Naive thymus-derived CD4-positive, alpha-beta T cell (primary cell): ENCODE measurements at regions of chr16 and their contacts with region 1.

Region 1: DNA sequence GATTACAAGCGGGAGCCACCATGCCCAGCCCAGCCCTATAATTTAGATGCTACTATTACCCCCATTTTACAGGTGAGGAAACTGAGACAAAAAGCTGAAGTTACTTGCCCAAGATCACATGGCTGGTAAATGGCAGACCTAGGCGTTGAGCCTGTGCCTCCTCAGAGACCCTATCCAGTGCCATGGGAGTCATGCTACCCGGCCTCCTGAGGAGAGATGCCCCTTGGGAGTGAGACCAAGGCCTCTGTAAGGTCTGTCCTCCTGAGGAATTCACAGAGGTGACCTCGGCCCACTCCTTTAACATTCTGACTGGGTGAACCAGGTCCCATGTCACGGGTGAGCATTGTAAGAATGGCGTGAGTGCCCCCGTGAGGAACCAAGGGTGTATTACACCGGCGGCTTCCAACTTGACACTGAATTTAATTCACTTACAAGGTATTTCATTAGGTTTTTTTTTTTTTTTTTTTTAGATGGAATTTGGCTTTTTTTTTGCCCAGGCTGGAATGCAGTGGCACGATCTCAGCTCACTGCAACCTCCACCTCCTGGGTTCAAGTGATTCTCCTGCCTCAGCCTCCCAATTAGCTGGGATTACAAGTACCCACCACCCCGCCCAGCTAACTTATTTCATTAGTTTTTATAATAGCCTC is 95.7 kb downstream of the ABCC6 start:
- DNase-seq: peak; percentile 33 to 70 (median 64)
- ATAC-seq: peak; percentile 93
- H3K4me3 ChIP-seq: no peak overlapping the region
- H3K4me3 Mint-ChIP-seq: no peak overlapping the region
- H3K27ac ChIP-seq: no peak overlapping the region
- H3K27ac Mint-ChIP-seq: peak overlapping the region in 7 of 9 donors; percentile 25 to 83 (median 56)
- H3K4me1 ChIP-seq: no peaks in the 10 kb centered on the region
- H3K4me1 Mint-ChIP-seq: peaks cover 0 to 6% (median 0%) of the 10 kb centered on the region in 7 donors
- H3K27me3 ChIP-seq: no peaks in the 10 kb centered on the region
- H3K27me3 Mint-ChIP-seq: no peaks in the 10 kb centered on the region

Region 2: GRCh38 chr16:15427648-15428239 is 699.8 kb before region 1 on chr16:
- CTCF ChIA-PET with region 1: no interaction called
- POLR2A ChIA-PET with region 1: no interaction called
- intact Hi-C with region 1: loop called in 1 of 2 experiments (anchors 2 kb)
- DNase-seq: peak in 7 of 9 donors; percentile 12 to 42 (median 31)
- ATAC-seq: peak; percentile 61
- H3K4me3 ChIP-seq: no peak overlapping the region
- H3K4me3 Mint-ChIP-seq: no peak overlapping the region
- H3K27ac ChIP-seq: no peak overlapping the region
- H3K27ac Mint-ChIP-seq: no peak overlapping the region
- H3K4me1 ChIP-seq: no peaks in the 10 kb centered on the region
- H3K4me1 Mint-ChIP-seq: peaks cover 0 to 2% (median 0%) of the 10 kb centered on the region in 7 donors
- H3K27me3 ChIP-seq: no peaks in the 10 kb centered on the region
- H3K27me3 Mint-ChIP-seq: peaks cover 0 to 7% (median under 1%) of the 10 kb centered on the region in 5 donors

Region 3: GRCh38 chr16:15765880-15766279 is 361.7 kb before region 1 on chr16:
- CTCF ChIA-PET with region 1: interaction called, 6 read pairs
- POLR2A ChIA-PET with region 1: no interaction called
- intact Hi-C with region 1: loop called in 1 of 2 experiments (anchors 1 kb)
- DNase-seq: peak in 6 of 9 donors; percentile 23 to 40 (median 32)
- ATAC-seq: peak; percentile 83
- H3K4me3 ChIP-seq: no peak overlapping the region
- H3K4me3 Mint-ChIP-seq: no peak overlapping the region
- H3K27ac ChIP-seq: no peak overlapping the region
- H3K27ac Mint-ChIP-seq: no peak overlapping the region
- H3K4me1 ChIP-seq: no peaks in the 10 kb centered on the region
- H3K4me1 Mint-ChIP-seq: peaks cover 0 to 2% (median 0%) of the 10 kb centered on the region in 7 donors
- H3K27me3 ChIP-seq: no peaks in the 10 kb centered on the region
- H3K27me3 Mint-ChIP-seq: peaks cover 0 to 11% (median 6%) of the 10 kb centered on the region in 5 donors

Region 4: GRCh38 chr16:15874745-15875314 is 252.8 kb before region 1 on chr16:
- CTCF ChIA-PET with region 1: interaction called, 16 read pairs
- POLR2A ChIA-PET with region 1: no interaction called
- intact Hi-C with region 1: loop called (anchors 1 kb)
- DNase-seq: peak in 2 of 9 donors; percentile 5 to 7
- ATAC-seq: no peak
- H3K4me3 ChIP-seq: no peak overlapping the region
- H3K4me3 Mint-ChIP-seq: no peak overlapping the region
- H3K27ac ChIP-seq: no peak overlapping the region
- H3K27ac Mint-ChIP-seq: peak overlapping the region in 2 of 9 donors; percentile 7 to 33
- H3K4me1 ChIP-seq: no peaks in the 10 kb centered on the region
- H3K4me1 Mint-ChIP-seq: peaks cover 0 to 12% (median 5%) of the 10 kb centered on the region in 7 donors
- H3K27me3 ChIP-seq: no peaks in the 10 kb centered on the region
- H3K27me3 Mint-ChIP-seq: no peaks in the 10 kb centered on the region

Region 5: GRCh38 chr16:15949210-15950160 is 178.1 kb before region 1 on chr16 and contains the start of gene ABCC1:
- CTCF ChIA-PET with region 1: no interaction called
- POLR2A ChIA-PET with region 1: no interaction called
- intact Hi-C with region 1: loop called (anchors 1 to 2 kb)
- DNase-seq: peak; percentile 21 to 69 (median 55)
- ATAC-seq: peak; percentile 80
- H3K4me3 ChIP-seq: peak within 1 kb of the TSS; percentile 83
- H3K4me3 Mint-ChIP-seq: peak within 1 kb of the TSS; percentile 91 to 100 (median 97)
- H3K27ac ChIP-seq: peak within 1 kb of the TSS; percentile 99
- H3K27ac Mint-ChIP-seq: peak within 1 kb of the TSS; percentile 93 to 99 (median 98)
- H3K4me1 ChIP-seq: peaks cover 11 to 15% of the 10 kb centered on the region in 2 donors
- H3K4me1 Mint-ChIP-seq: peaks cover 31 to 47% (median 39%) of the 10 kb centered on the region in 7 donors
- H3K27me3 ChIP-seq: no peaks in the 10 kb centered on the region
- H3K27me3 Mint-ChIP-seq: no peaks in the 10 kb centered on the region
- total RNA-seq, gene ABCC1: 57.3 to 95.8 (median 64.1) TPM

Region 6: GRCh38 chr16:16096121-16096857 is 31.3 kb before region 1 on chr16:
- CTCF ChIA-PET with region 1: no interaction called
- POLR2A ChIA-PET with region 1: no interaction called
- intact Hi-C with region 1: no loop called
- DNase-seq: no peak
- ATAC-seq: no peak
- H3K4me3 ChIP-seq: no peak overlapping the region
- H3K4me3 Mint-ChIP-seq: no peak overlapping the region
- H3K27ac ChIP-seq: no peak overlapping the region
- H3K27ac Mint-ChIP-seq: peak overlapping the region in 4 of 9 donors; percentile 7 to 86 (median 42)
- H3K4me1 ChIP-seq: no peaks in the 10 kb centered on the region
- H3K4me1 Mint-ChIP-seq: peaks cover 0 to 5% (median 0%) of the 10 kb centered on the region in 7 donors
- H3K27me3 ChIP-seq: no peaks in the 10 kb centered on the region
- H3K27me3 Mint-ChIP-seq: no peaks in the 10 kb centered on the region